ENCODE measurements at regions of chr2 and their contacts with region 1.

Region 1: GRCh38 chr2:43484323-43484930 is 111.4 kb downstream of the THADA start:
- DNase-seq: peak in 2 of 9 experiments; percentile 73 to 82
- ATAC-seq: peak; percentile 34
- H3K4me3 ChIP-seq: no peak overlapping the region
- H3K4me3 Mint-ChIP-seq: no peak overlapping the region
- H3K27ac ChIP-seq: no peak overlapping the region
- H3K27ac Mint-ChIP-seq: no peak overlapping the region
- H3K4me1 ChIP-seq: no peaks in the 10 kb centered on the region
- H3K4me1 Mint-ChIP-seq: peaks cover 11% of the 10 kb centered on the region
- H3K27me3 ChIP-seq: no peaks in the 10 kb centered on the region
- H3K27me3 Mint-ChIP-seq: no peaks in the 10 kb centered on the region
- CTCF ChIP-seq: peak; percentile 84

Region 2: GRCh38 chr2:42859006-42859552 is 625.3 kb before region 1 on chr2:
- CTCF ChIA-PET with region 1: interaction called, 10 read pairs
- POLR2A ChIA-PET with region 1: no interaction called
- intact Hi-C with region 1: loop called (anchors 1 to 2 kb)
- DNase-seq: peak in 8 of 9 experiments; percentile 46 to 71 (median 67)
- ATAC-seq: no peak
- H3K4me3 ChIP-seq: no peak overlapping the region
- H3K4me3 Mint-ChIP-seq: no peak overlapping the region
- H3K27ac ChIP-seq: no peak overlapping the region
- H3K27ac Mint-ChIP-seq: no peak overlapping the region
- H3K4me1 ChIP-seq: no peaks in the 10 kb centered on the region
- H3K4me1 Mint-ChIP-seq: no peaks in the 10 kb centered on the region
- H3K27me3 ChIP-seq: no peaks in the 10 kb centered on the region
- H3K27me3 Mint-ChIP-seq: no peaks in the 10 kb centered on the region
- CTCF ChIP-seq: peak; percentile 71

Region 3: DNA sequence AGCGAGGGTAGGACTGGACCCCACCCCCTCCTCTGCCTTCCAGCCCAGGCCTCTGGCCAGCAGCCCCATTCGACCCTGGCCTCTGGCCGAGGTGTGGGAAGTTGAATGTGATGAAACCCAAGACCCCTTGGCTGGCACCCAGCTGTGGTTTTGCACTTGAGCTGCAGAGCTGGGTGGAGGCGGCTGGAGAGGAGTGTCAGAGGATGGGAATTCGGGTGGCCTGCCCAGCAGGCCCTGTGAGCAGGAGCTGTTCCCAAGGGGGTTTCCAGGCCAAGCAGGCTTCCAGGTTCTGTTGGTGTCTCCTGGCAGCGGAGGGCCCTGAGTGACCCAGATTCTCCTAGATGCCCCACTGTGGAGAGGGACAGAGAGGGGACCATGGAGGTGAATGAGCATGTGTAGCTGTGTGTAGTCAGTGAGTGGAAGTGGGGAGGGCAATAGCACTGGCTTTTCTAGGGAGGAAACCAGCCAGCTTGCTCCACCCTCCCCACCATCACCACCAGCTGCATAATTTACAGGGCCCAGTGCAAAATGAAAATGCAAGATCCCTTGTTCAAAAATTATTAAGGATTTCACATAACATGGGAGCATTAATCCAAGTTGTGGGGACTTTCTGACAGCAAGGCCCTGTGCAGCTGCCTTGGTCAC is 519.9 kb before region 1 on chr2:
- CTCF ChIA-PET with region 1: interaction called, 10 read pairs
- POLR2A ChIA-PET with region 1: no interaction called
- intact Hi-C with region 1: no loop called
- DNase-seq: no peak
- ATAC-seq: no peak
- H3K4me3 ChIP-seq: no peak overlapping the region
- H3K4me3 Mint-ChIP-seq: no peak overlapping the region
- H3K27ac ChIP-seq: no peak overlapping the region
- H3K27ac Mint-ChIP-seq: no peak overlapping the region
- H3K4me1 ChIP-seq: peaks cover 18% of the 10 kb centered on the region
- H3K4me1 Mint-ChIP-seq: peaks cover 19% of the 10 kb centered on the region
- H3K27me3 ChIP-seq: no peaks in the 10 kb centered on the region
- H3K27me3 Mint-ChIP-seq: peaks cover 6% of the 10 kb centered on the region
- CTCF ChIP-seq: no peak

Region 4: DNA sequence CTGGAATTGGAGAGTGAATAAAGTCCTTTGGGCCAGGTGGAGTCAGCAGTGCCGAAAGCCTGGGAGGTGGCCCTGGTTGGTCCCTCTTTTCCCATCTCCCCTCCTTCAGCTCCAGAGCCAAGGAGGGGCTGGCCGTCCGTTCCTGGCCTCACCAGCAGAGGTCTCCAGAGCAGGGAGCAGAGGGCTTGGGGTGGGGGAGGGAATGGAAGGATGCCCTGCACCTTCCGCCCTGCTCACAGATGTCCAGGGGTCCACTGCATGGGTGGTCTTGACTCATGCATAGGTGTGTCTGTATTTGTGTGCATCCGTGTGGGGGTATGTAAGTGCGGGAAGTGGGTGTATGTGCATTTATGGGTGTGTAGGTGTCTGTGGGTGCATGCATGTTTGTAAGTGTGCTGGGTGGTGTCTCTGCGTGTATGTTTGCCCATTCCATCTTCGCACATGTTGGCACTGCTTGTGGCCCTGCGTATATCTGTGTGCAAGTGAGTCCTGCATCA is 459.9 kb before region 1 on chr2:
- CTCF ChIA-PET with region 1: interaction called, 13 read pairs
- POLR2A ChIA-PET with region 1: no interaction called
- intact Hi-C with region 1: no loop called
- DNase-seq: peak in 8 of 9 experiments; percentile 6 to 67 (median 38)
- ATAC-seq: peak; percentile 55
- H3K4me3 ChIP-seq: no peak overlapping the region
- H3K4me3 Mint-ChIP-seq: no peak overlapping the region
- H3K27ac ChIP-seq: no peak overlapping the region
- H3K27ac Mint-ChIP-seq: no peak overlapping the region
- H3K4me1 ChIP-seq: peaks cover 13% of the 10 kb centered on the region
- H3K4me1 Mint-ChIP-seq: peaks cover 24% of the 10 kb centered on the region
- H3K27me3 ChIP-seq: no peaks in the 10 kb centered on the region
- H3K27me3 Mint-ChIP-seq: no peaks in the 10 kb centered on the region
- CTCF ChIP-seq: no peak

Region 5: DNA sequence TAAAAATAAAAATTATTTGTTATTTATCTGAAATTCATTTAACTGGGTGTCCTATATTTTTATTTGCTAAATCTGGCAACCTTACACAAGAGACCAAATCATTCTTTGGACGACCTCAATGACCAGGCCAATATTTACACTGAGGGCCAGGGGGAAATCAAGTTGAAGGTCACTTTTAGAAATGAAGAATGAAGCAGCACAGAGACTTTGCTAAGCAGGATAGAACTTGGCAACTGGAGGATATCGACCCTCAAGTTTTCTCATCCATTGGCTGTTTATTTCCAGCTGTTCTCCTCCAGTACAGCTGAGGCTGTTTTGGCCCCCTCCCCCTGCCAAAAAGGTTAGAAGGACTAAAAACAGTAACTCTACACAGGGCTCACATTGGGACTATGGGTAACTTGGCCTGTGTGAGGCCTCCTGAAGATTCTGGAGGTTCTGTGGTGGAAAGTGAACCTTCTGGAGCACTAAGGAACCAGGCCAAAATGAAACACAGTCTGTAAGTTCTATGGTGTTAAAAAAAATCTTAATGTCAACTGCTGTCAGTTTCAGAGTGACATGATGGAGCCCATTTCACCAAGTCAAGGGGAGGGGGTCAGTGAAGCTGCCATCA is 225.8 kb before region 1 on chr2:
- CTCF ChIA-PET with region 1: no interaction called
- POLR2A ChIA-PET with region 1: no interaction called
- intact Hi-C with region 1: no loop called
- DNase-seq: no peak
- ATAC-seq: no peak
- H3K4me3 ChIP-seq: no peak overlapping the region
- H3K4me3 Mint-ChIP-seq: no peak overlapping the region
- H3K27ac ChIP-seq: no peak overlapping the region
- H3K27ac Mint-ChIP-seq: no peak overlapping the region
- H3K4me1 ChIP-seq: no peaks in the 10 kb centered on the region
- H3K4me1 Mint-ChIP-seq: no peaks in the 10 kb centered on the region
- H3K27me3 ChIP-seq: no peaks in the 10 kb centered on the region
- H3K27me3 Mint-ChIP-seq: no peaks in the 10 kb centered on the region
- CTCF ChIP-seq: no peak

Region 6: GRCh38 chr2:43467891-43468290 is 16.5 kb before region 1 on chr2:
- CTCF ChIA-PET with region 1: interaction called, 11 read pairs
- POLR2A ChIA-PET with region 1: no interaction called
- intact Hi-C with region 1: no loop called
- DNase-seq: no peak
- ATAC-seq: no peak
- H3K4me3 ChIP-seq: no peak overlapping the region
- H3K4me3 Mint-ChIP-seq: no peak overlapping the region
- H3K27ac ChIP-seq: no peak overlapping the region
- H3K27ac Mint-ChIP-seq: no peak overlapping the region
- H3K4me1 ChIP-seq: no peaks in the 10 kb centered on the region
- H3K4me1 Mint-ChIP-seq: no peaks in the 10 kb centered on the region
- H3K27me3 ChIP-seq: no peaks in the 10 kb centered on the region
- H3K27me3 Mint-ChIP-seq: no peaks in the 10 kb centered on the region
- CTCF ChIP-seq: no peak

Measured in CD8-positive, alpha-beta T cell (primary cell).